ENCODE measurements at regions of chr3 and their contacts with region 1.

Region 1: DNA sequence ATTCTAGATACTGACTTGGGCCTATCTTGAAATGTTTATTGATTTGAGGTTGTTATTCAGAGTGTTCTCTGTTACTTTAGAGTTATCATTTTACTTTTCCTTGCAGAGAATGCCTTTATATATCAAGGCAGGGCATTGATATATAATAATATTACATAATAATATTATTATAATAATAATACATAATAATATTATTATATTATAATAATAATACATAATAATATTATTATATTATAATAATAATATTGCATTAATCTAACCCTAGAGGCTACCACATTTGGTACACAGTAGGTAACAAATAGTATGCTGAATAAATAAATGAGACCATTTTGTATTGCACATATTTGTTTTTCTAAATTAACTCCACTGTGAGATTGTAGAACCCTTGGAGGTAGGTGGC is 216.3 kb downstream of the EFHB start:
- DNase-seq: no peak
- ATAC-seq: no peak
- H3K4me3 ChIP-seq: no peak overlapping the region
- H3K27ac ChIP-seq: no peak overlapping the region
- H3K4me1 ChIP-seq: no peaks in the 10 kb centered on the region
- H3K27me3 ChIP-seq: no peaks in the 10 kb centered on the region
- CTCF ChIP-seq: no peak

Region 2: DNA sequence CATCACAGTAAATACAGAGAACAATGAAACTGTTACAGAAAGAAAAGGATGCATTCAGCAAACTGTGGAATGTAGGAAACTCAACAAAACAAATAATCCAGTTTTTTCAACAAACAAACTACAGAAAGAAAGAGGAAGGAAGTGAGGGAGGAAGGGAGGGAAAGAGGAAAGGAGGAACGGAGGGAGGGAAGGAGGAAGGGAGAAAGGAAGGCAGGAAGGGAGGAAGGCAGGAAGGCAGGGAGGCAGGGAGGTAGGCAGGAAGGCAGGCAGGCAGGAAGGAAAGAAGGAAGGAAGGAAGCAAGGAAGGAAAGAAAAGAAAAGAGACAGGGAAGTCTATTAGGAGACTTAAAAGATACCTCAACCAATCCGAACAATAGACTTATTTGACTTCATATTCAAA is 80.6 kb after region 1 on chr3:
- intact Hi-C with region 1: no loop called
- DNase-seq: no peak
- ATAC-seq: no peak
- H3K4me3 ChIP-seq: no peak overlapping the region
- H3K27ac ChIP-seq: no peak overlapping the region
- H3K4me1 ChIP-seq: no peaks in the 10 kb centered on the region
- H3K27me3 ChIP-seq: no peaks in the 10 kb centered on the region
- CTCF ChIP-seq: no peak

Region 3: GRCh38 chr3:19808834-19809233 is 91.1 kb after region 1 on chr3:
- intact Hi-C with region 1: loop called in 1 of 10 experiments (anchors 2 kb)
- DNase-seq: no peak
- ATAC-seq: peak in 7 of 8 donors; percentile 25 to 82 (median 59)
- H3K4me3 ChIP-seq: no peak overlapping the region
- H3K27ac ChIP-seq: peak overlapping the region in 6 of 10 donors; percentile 8 to 71 (median 48)
- H3K4me1 ChIP-seq: peaks cover 0 to 6% (median 0%) of the 10 kb centered on the region in 9 donors
- H3K27me3 ChIP-seq: no peaks in the 10 kb centered on the region
- CTCF ChIP-seq: no peak

Measured in heart right ventricle (tissue), 16 donors.